ENCODE measurements at regions of chr12 and their contacts with region 1.

Region 1: GRCh38 chr12:6533923-6534694 is at the start of gene GAPDH:
- DNase-seq: peak; percentile 98 to 99
- H3K4me3 ChIP-seq: peak within 1 kb of the TSS; percentile 93
- H3K4me3 Mint-ChIP-seq: peak within 1 kb of the TSS; percentile 91
- H3K27ac Mint-ChIP-seq: peak within 1 kb of the TSS; percentile 97
- H3K4me1 ChIP-seq: peaks cover 36% of the 10 kb centered on the region
- H3K4me1 Mint-ChIP-seq: peaks cover 46% of the 10 kb centered on the region
- H3K27me3 ChIP-seq: no peaks in the 10 kb centered on the region
- H3K27me3 Mint-ChIP-seq: no peaks in the 10 kb centered on the region
- CTCF ChIP-seq: no peak
- total RNA-seq, gene GAPDH: 4,975 and 5,337 TPM in 2 replicates

Region 2: DNA sequence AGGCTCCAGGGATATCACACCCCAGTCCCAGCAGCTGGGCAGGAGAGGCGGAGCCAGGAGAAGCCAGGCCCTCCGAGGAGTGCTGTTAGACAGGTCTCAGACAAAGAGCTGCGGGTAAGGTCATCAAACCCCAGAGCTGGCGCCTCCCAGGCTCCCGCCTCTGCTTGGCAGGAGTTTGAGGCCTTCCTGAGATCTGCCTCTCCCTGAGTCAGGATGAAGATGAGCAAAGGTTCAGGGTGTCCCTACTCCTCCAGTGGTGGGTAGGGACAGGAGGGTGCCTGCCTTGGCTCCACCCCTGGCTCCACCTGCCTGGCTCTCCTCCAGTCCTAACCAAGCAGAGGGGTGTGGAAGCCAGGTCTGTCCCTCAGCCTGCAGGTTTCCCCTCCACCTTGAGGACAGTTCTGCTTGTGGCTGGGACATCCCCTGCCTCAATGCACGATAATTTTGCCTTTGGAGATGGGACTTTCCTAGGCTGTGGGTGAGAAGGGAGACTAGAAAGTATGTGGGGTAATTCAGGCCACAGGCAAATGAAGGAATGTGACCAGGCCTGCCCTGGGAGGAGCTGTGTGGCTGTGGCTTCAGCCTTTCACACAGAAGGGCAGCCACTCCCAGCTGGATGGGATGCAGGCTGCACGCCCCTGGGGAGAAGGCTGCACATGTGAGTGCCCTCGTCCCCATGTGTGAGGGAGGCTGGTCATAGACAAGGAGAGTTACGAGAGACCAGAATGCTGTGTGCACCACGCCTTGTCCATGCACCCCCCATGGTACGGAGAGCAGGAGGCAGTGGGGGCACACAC is 221.4 kb before region 1 on chr12:
- CTCF ChIA-PET with region 1: interaction called, 5 read pairs
- POLR2A ChIA-PET with region 1: interaction called, 16 read pairs
- intact Hi-C with region 1: no loop called
- DNase-seq: peak; percentile 84 to 86
- H3K4me3 ChIP-seq: no peak overlapping the region
- H3K4me3 Mint-ChIP-seq: peak overlapping the region; percentile 79
- H3K27ac Mint-ChIP-seq: peak overlapping the region; percentile 83
- H3K4me1 ChIP-seq: peaks cover 64% of the 10 kb centered on the region
- H3K4me1 Mint-ChIP-seq: peaks cover 45% of the 10 kb centered on the region
- H3K27me3 ChIP-seq: no peaks in the 10 kb centered on the region
- H3K27me3 Mint-ChIP-seq: no peaks in the 10 kb centered on the region
- CTCF ChIP-seq: no peak

Region 3: DNA sequence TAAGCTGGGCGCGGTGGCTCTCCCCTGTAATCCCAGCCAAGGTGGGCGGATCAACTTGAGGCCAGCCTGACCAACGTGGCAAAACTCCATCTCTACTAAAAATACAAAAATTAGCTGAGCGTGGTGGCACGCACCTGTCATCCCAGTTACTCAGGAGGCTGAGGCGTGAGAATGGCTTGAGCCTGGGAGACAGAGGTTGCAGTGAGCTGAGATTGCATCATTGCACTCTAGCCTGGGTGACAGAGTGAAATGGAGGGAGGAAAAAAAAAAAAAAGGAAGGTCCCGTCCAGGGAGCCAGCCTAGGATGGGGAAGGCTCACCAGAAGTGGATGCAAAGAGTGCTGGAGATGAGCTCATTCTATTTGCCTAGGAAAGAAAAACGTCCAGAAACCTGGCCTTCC is 91.3 kb before region 1 on chr12:
- CTCF ChIA-PET with region 1: no interaction called
- POLR2A ChIA-PET with region 1: interaction called, 17 read pairs
- intact Hi-C with region 1: no loop called
- DNase-seq: no peak
- H3K4me3 ChIP-seq: no peak overlapping the region
- H3K4me3 Mint-ChIP-seq: no peak overlapping the region
- H3K27ac Mint-ChIP-seq: no peak overlapping the region
- H3K4me1 ChIP-seq: no peaks in the 10 kb centered on the region
- H3K4me1 Mint-ChIP-seq: no peaks in the 10 kb centered on the region
- H3K27me3 ChIP-seq: no peaks in the 10 kb centered on the region
- H3K27me3 Mint-ChIP-seq: no peaks in the 10 kb centered on the region
- CTCF ChIP-seq: no peak

Region 4: GRCh38 chr12:6500466-6500865 is 33.6 kb before region 1 on chr12:
- CTCF ChIA-PET with region 1: interaction called, 12 read pairs
- POLR2A ChIA-PET with region 1: interaction called, 39 read pairs
- intact Hi-C with region 1: no loop called
- DNase-seq: no peak
- H3K4me3 ChIP-seq: no peak overlapping the region
- H3K4me3 Mint-ChIP-seq: no peak overlapping the region
- H3K27ac Mint-ChIP-seq: no peak overlapping the region
- H3K4me1 ChIP-seq: peaks cover 3% of the 10 kb centered on the region
- H3K4me1 Mint-ChIP-seq: peaks cover 3% of the 10 kb centered on the region
- H3K27me3 ChIP-seq: no peaks in the 10 kb centered on the region
- H3K27me3 Mint-ChIP-seq: no peaks in the 10 kb centered on the region
- CTCF ChIP-seq: no peak

Region 5: GRCh38 chr12:6592087-6592486 is 58.0 kb after region 1 on chr12:
- CTCF ChIA-PET with region 1: interaction called, 3 read pairs
- POLR2A ChIA-PET with region 1: interaction called, 13 read pairs
- intact Hi-C with region 1: no loop called
- DNase-seq: no peak
- H3K4me3 ChIP-seq: no peak overlapping the region
- H3K4me3 Mint-ChIP-seq: no peak overlapping the region
- H3K27ac Mint-ChIP-seq: no peak overlapping the region
- H3K4me1 ChIP-seq: no peaks in the 10 kb centered on the region
- H3K4me1 Mint-ChIP-seq: no peaks in the 10 kb centered on the region
- H3K27me3 ChIP-seq: no peaks in the 10 kb centered on the region
- H3K27me3 Mint-ChIP-seq: no peaks in the 10 kb centered on the region
- CTCF ChIP-seq: no peak

Region 6: GRCh38 chr12:6632026-6632983 is 98.2 kb after region 1 on chr12:
- CTCF ChIA-PET with region 1: no interaction called
- POLR2A ChIA-PET with region 1: no interaction called
- intact Hi-C with region 1: no loop called
- DNase-seq: no peak
- H3K4me3 ChIP-seq: no peak overlapping the region
- H3K4me3 Mint-ChIP-seq: no peak overlapping the region
- H3K27ac Mint-ChIP-seq: no peak overlapping the region
- H3K4me1 ChIP-seq: peaks cover 10% of the 10 kb centered on the region
- H3K4me1 Mint-ChIP-seq: peaks cover 12% of the 10 kb centered on the region
- H3K27me3 ChIP-seq: no peaks in the 10 kb centered on the region
- H3K27me3 Mint-ChIP-seq: peaks cover 2% of the 10 kb centered on the region
- CTCF ChIP-seq: no peak

Region 7: DNA sequence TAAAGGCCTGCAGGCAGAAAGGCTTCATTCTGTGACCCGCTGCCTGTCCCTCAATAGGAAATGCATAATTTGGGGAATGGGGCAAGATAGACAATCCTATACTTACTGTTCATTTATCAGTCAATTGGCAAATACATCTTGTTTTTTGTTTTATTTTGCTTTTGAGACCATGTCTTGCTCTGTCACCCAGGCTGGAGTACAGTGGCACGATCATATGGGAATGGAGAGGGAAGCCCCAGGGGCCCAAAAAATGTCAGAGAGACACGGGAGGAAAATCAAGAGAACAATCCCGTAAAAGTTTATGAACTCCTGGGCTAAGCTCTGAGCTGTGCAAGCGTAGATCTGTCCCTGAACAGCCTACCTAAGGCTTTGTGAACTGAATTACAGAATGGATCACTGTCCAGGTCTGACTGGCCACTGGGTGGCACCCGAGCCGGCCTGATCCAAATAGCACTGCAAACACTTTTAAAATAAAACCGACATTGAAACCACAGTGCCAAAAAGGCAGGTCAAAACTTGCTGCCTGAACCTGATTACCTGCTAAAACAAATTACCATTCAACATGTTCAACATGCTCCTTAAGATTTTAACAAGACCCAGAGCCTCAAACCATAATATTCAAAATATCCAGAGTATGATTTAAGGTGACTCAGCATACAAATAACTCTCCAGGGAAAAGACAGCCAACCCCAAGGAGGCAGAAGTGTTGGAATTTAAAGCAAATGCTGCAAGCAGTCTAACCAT is 201.5 kb after region 1 on chr12:
- CTCF ChIA-PET with region 1: no interaction called
- POLR2A ChIA-PET with region 1: interaction called, 10 read pairs
- intact Hi-C with region 1: no loop called
- DNase-seq: peak; percentile 70 to 81
- H3K4me3 ChIP-seq: no peak overlapping the region
- H3K4me3 Mint-ChIP-seq: no peak overlapping the region
- H3K27ac Mint-ChIP-seq: peak overlapping the region; percentile 24
- H3K4me1 ChIP-seq: no peaks in the 10 kb centered on the region
- H3K4me1 Mint-ChIP-seq: peaks cover 8% of the 10 kb centered on the region
- H3K27me3 ChIP-seq: no peaks in the 10 kb centered on the region
- H3K27me3 Mint-ChIP-seq: no peaks in the 10 kb centered on the region
- CTCF ChIP-seq: peak; percentile 94